MCF 10A (cell line): ENCODE measurements at regions of chr1 and their contacts with region 1.

Region 1: GRCh38 chr1:160607011-160607671 is 27.8 kb upstream of the CD84 start:
- DNase-seq: peak; percentile 85
- H3K4me3 Mint-ChIP-seq: no peak overlapping the region
- H3K27ac Mint-ChIP-seq: no peak overlapping the region
- H3K4me1 Mint-ChIP-seq: no peaks in the 10 kb centered on the region
- H3K27me3 Mint-ChIP-seq: peaks cover 74% of the 10 kb centered on the region
- CTCF ChIP-seq: peak; percentile 96

Region 2: DNA sequence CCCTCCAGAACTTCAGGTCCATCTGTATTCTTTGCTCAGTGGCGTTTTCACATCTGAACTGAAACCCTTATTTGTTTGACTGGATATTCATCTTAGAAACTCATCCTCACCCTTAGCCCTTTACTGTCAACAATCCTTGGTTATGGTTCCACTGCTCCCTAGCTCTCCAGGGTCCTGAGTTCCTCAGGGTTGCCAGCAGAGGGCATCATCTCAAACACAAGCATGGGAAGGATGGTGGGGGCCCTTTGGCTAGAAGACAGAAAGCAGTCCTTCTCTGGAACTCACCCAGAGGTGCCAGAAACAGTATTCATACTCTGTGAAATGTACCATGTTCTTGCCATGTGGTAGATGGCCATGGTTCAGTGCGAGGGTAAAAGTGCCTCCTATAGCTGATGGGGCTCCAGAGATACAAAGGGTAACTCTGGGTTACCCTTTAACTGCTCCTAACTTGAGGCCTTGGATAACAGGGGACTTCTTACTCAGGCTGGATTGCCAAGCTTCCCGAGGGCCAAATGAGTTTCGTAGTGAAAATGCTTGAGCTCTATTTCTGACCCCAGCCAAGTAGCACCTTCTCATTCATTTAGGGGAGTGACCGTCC is 252.7 kb before region 1 on chr1:
- CTCF ChIA-PET with region 1: interaction called, 11 read pairs
- POLR2A ChIA-PET with region 1: no interaction called
- intact Hi-C with region 1: loop called (anchors 10 kb)
- DNase-seq: peak; percentile 39
- H3K4me3 Mint-ChIP-seq: no peak overlapping the region
- H3K27ac Mint-ChIP-seq: no peak overlapping the region
- H3K4me1 Mint-ChIP-seq: no peaks in the 10 kb centered on the region
- H3K27me3 Mint-ChIP-seq: no peaks in the 10 kb centered on the region
- CTCF ChIP-seq: peak; percentile 46

Region 3: DNA sequence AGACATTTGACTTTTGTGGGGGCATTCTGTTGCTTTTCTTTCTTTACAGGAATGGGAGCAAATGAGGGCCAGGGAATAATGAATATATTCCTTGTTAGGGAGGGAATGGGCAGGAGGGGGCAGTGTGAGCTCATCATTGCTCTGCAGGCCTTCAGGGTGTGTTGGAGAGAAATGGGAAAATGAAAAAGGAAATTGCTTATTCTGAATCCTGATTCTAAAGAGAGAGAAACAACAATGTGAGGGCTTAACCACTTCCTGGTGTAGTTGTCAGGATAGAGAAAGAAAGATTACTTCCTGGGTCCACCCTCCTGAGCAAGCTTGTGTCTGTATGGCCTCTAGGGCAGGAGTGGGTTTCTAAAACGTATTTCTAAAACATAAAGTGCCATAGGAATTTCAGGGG is 178.5 kb before region 1 on chr1:
- CTCF ChIA-PET with region 1: interaction called, 153 read pairs
- POLR2A ChIA-PET with region 1: interaction called, 5 read pairs
- intact Hi-C with region 1: loop called (anchors 1 kb)
- DNase-seq: peak; percentile 70
- H3K4me3 Mint-ChIP-seq: no peak overlapping the region
- H3K27ac Mint-ChIP-seq: no peak overlapping the region
- H3K4me1 Mint-ChIP-seq: no peaks in the 10 kb centered on the region
- H3K27me3 Mint-ChIP-seq: peaks cover 8% of the 10 kb centered on the region
- CTCF ChIP-seq: peak; percentile 93

Region 4: GRCh38 chr1:160539990-160540858 is 66.9 kb before region 1 on chr1:
- CTCF ChIA-PET with region 1: interaction called, 21 read pairs
- POLR2A ChIA-PET with region 1: no interaction called
- intact Hi-C with region 1: loop called (anchors 2 kb)
- DNase-seq: no peak
- H3K4me3 Mint-ChIP-seq: no peak overlapping the region
- H3K27ac Mint-ChIP-seq: no peak overlapping the region
- H3K4me1 Mint-ChIP-seq: peaks cover 7% of the 10 kb centered on the region
- H3K27me3 Mint-ChIP-seq: no peaks in the 10 kb centered on the region
- CTCF ChIP-seq: no peak

Region 5: GRCh38 chr1:160618763-160619274 is 11.7 kb after region 1 on chr1:
- CTCF ChIA-PET with region 1: interaction called, 77 read pairs
- POLR2A ChIA-PET with region 1: no interaction called
- intact Hi-C with region 1: no loop called
- DNase-seq: no peak
- H3K4me3 Mint-ChIP-seq: no peak overlapping the region
- H3K27ac Mint-ChIP-seq: no peak overlapping the region
- H3K4me1 Mint-ChIP-seq: no peaks in the 10 kb centered on the region
- H3K27me3 Mint-ChIP-seq: peaks cover 18% of the 10 kb centered on the region
- CTCF ChIP-seq: peak; percentile 45

Region 6: GRCh38 chr1:160637821-160638539 is 30.8 kb after region 1 on chr1:
- CTCF ChIA-PET with region 1: no interaction called
- POLR2A ChIA-PET with region 1: no interaction called
- intact Hi-C with region 1: no loop called
- DNase-seq: no peak
- H3K4me3 Mint-ChIP-seq: no peak overlapping the region
- H3K27ac Mint-ChIP-seq: no peak overlapping the region
- H3K4me1 Mint-ChIP-seq: no peaks in the 10 kb centered on the region
- H3K27me3 Mint-ChIP-seq: no peaks in the 10 kb centered on the region
- CTCF ChIP-seq: no peak

Region 7: DNA sequence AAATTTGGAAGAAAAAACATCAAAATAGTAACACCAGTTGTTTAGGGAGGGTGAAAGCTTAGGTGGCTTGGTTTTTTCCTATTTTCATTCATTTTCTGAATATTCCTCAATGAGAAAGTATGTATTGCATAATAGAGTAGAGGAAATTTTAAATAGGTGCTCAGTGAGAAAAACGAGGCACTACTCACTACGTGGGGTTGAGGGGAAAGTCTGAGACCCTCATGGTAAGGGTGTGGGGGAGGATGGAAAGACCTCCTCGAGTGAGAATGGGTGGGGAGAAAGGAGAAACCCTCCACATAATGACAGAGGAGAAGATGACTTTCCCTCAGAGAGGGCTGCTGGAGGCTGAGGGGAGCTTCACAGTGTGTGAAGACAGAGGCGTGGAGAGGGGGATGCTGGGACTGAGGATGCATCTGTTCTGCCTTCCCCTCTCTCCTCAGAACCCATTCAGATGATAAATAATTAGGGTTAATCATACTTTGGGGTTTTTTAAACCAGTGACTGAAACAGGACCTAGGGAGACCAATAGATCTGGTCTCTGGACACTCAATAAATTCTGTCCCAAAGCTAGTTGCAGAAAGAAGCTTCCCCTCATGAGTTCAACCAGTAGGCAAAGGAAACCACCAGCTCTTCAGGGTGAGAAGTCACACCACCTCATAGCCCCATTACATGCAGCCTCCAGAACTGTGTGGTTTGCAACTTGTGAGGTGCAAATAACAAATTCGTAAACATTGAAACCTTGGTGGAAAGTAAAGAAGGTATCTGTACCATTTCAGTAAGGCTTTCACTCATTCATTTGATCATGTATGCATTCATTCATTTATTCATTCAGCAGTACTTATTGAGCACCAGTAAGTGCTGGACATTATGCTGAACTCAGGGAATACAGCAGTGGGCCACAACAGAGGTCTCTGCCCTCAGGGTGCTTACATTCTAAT is 149.0 kb after region 1 on chr1:
- CTCF ChIA-PET with region 1: no interaction called
- POLR2A ChIA-PET with region 1: no interaction called
- intact Hi-C with region 1: no loop called
- DNase-seq: no peak
- H3K4me3 Mint-ChIP-seq: no peak overlapping the region
- H3K27ac Mint-ChIP-seq: no peak overlapping the region
- H3K4me1 Mint-ChIP-seq: no peaks in the 10 kb centered on the region
- H3K27me3 Mint-ChIP-seq: no peaks in the 10 kb centered on the region
- CTCF ChIP-seq: no peak

Region 8: GRCh38 chr1:160887071-160887470 is 279.9 kb after region 1 on chr1:
- CTCF ChIA-PET with region 1: no interaction called
- POLR2A ChIA-PET with region 1: no interaction called
- intact Hi-C with region 1: no loop called
- DNase-seq: no peak
- H3K4me3 Mint-ChIP-seq: no peak overlapping the region
- H3K27ac Mint-ChIP-seq: no peak overlapping the region
- H3K4me1 Mint-ChIP-seq: no peaks in the 10 kb centered on the region
- H3K27me3 Mint-ChIP-seq: no peaks in the 10 kb centered on the region
- CTCF ChIP-seq: no peak